Right ventricle myocardium superior (tissue), 1 donor: ENCODE measurements at regions of chr6 and their contacts with region 1.

Region 1: GRCh38 chr6:148464319-148465010 is 121.8 kb downstream of the SASH1 start:
- DNase-seq: peak; percentile 60
- ATAC-seq: peak; percentile 83

Region 2: DNA sequence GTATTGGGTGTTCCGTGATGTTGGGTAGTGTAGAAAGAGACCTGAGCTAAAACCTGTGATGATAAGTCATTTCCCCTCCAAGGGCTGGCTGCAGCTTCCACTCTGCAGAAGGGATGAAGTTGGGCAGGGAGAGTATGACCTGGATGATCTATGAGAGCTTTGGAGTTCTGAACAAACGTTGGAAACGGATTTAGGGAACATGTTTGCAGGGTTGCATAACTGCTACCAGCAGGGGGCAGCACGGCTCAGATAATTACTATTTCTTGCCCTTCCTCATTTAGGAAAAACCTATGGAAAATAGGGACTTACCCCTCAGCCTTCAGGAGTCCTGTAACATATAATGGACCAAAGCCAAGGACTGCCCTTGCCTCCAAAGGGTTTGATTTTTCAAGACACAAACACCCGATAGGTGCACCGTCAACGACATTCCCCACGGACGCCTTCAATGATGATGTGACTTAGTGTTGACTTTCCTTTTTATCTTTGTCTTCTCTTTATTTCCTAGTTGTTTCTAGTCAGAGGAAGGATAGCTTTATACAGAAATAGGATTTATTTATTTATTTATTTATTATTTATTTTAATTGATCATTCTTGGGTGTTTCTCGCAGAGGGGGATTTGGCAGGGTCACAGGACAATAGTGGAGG is 286.8 kb before region 1 on chr6:
- intact Hi-C with region 1: loop called (anchors 2 kb)
- DNase-seq: peak; percentile 78
- ATAC-seq: peak; percentile 69

Region 3: DNA sequence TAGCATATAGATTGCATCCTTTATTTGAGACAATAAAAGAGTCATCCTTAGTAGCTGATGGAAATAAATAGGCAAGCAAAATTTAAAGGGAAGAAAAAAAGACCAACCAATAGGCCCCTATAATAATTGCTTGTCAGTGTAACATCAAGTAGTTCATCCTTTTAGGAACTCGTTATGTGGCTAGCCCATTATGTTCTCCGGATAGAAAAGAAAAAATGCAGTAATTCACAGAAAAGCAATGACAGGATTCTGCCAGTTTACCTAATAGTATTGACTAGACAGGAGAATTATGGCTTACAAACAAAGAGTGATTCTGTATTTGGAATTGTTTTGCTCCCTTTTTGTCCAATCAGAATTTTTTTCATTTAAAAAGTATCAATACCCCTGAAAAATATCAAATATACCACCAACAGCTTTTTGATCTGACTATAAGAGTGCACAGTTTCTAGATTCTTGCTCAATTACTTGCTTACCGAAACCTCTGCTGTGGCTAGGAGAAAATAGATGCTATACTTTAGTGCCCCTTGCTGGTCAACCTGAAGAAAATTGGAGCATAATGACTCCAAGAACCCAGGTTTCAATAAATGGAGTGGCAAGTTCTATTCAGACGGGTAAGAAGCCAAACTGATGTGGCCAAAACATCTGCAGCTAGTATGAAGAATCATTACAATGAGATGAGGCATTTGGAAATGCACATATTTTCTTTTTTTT is 213.3 kb before region 1 on chr6:
- intact Hi-C with region 1: loop called (anchors 10 kb)
- DNase-seq: no peak
- ATAC-seq: peak; percentile 83

Region 4: DNA sequence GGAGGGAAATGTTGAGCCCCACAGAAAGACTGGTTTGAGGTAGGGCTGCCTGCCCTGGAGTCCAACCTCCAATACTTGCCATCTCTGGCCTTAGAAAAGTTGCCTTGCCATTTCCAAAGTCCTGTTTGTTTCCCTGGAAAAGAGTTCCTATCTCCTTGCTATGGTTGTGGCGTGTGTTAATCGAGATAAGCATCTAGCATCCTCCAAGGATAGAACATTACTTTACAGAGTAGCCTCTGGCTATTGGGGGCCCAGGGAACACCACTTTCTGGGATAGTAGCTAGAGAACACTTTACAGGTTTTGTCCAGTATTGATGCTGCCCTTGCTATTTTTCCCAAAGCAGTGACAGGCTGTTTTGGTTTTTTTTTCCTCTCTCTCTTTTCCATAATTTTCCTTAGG is 179.3 kb before region 1 on chr6:
- intact Hi-C with region 1: no loop called
- DNase-seq: no peak
- ATAC-seq: no peak

Region 5: DNA sequence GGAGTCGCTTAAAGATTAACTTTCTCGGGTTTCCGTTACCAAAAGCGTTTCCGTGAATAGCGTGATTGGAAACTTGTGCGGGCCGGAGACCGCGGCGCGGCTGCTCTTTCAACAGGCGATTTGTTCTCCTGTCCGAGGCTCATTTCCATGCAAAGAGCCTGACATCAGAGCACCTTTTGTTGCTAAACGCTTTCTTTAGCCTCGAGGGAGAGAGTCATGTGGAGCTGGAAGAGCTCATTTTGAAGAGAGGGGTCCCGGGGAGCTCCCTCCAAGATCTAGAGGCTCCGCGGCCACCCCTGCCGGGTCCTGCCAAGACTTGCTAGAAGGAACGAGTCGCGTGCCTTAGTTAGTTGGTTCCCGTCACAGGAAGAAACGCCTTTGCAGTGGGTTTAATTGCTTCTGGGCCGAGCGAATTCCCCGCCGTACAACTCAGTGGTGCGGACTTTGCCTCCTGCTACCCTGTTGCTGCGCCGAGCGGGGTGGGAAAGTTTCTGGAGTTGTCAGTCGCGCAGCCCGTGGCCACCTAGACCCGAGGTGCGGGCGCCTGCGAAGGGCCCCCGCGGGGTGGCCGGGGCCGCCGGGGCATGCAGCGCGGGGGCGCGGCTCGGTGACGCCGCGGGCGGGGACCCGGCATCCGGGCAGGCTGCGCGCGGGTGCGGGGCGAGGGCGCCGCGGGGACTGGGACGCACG is 122.0 kb before region 1 on chr6 and contains the start of gene SASH1:
- intact Hi-C with region 1: loop called (anchors 10 kb)
- DNase-seq: peak; percentile 82
- ATAC-seq: peak; percentile 90
- total RNA-seq, gene SASH1: 35.8 TPM

Region 6: GRCh38 chr6:148736774-148737412 is 272.4 kb after region 1 on chr6:
- intact Hi-C with region 1: no loop called
- DNase-seq: no peak
- ATAC-seq: no peak